Kidney (tissue), 22 donors: ENCODE measurements at regions of chr6 and their contacts with region 1.

Region 1: DNA sequence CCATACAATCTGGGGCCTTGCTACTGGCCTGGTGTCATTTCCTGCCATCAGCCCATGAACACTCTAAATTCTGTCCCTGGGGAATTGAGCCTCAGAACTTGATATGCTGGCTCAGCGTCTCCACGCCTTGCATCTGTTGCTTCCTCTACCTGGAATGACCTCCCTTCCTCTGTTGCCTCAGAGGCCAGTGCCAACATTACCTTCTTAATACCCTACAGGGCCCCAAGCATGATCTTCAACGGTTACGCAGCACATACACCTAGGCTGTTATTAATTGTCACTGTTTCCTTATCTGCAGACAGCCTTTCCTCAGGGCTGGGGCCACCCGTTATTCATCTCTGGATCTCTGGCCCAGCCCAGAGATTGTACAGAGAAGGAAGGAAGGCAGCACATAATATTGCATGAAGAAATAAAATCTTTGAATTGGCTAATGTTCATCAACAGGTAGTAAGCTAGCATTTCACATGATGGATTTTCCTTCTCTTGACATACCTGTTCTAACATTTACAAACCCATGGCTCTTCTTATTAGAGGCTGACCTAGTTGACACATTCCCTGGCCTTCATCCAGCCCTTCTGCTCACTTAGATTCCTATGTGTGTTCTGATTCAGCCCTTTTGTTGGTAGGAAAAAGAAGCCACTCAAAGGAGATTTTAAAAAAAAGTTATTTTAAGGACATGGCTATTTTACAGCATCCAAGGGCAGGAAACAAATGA is 8.4 kb upstream of the RNF182 start:
- DNase-seq: no peak
- H3K4me3 ChIP-seq: no peak overlapping the region
- H3K27ac ChIP-seq: no peak overlapping the region
- H3K4me1 ChIP-seq: no peaks in the 10 kb centered on the region
- H3K27me3 ChIP-seq: no peaks in the 10 kb centered on the region
- CTCF ChIP-seq: no peak

Region 2: GRCh38 chr6:13831615-13832014 is 84.8 kb before region 1 on chr6:
- intact Hi-C with region 1: no loop called
- DNase-seq: no peak
- H3K4me3 ChIP-seq: no peak overlapping the region
- H3K27ac ChIP-seq: no peak overlapping the region
- H3K4me1 ChIP-seq: no peaks in the 10 kb centered on the region
- H3K27me3 ChIP-seq: no peaks in the 10 kb centered on the region
- CTCF ChIP-seq: no peak

Region 3: DNA sequence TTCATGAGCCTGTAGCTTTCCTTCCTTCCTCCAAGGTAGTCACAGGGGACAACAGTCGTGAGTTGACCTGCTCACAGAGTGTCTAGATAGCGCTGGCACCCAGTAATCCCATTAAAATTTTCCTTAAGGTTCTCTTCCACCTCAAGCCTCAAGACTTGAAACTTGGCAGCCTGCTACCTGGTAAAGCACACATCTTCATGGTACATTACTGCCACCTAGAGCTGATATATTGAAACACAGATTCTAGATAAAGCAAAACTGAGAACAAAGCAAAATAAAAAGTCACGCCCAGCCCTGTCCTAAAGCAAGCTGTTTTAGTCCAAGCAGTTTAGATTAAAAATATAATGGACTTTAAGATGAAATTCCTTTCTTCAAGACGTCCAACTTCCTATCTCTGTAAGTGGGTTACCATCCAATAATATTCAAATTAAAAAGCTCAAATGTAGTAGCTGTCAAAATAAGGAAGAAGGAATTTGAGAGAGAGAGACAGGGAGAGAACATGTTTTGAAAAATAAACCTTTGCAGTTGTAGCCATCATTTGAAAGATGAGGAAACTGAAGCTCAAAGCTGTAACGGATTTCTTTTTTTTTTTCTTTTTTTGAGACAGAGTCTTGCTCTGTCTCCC is 150.5 kb after region 1 on chr6:
- intact Hi-C with region 1: loop called (anchors 10 kb)
- DNase-seq: peak in 3 of 5 donors; percentile 24 to 87 (median 81)
- H3K4me3 ChIP-seq: no peak overlapping the region
- H3K27ac ChIP-seq: no peak overlapping the region
- H3K4me1 ChIP-seq: no peaks in the 10 kb centered on the region
- H3K27me3 ChIP-seq: no peaks in the 10 kb centered on the region
- CTCF ChIP-seq: peak; percentile 72